ENCODE measurements at regions of chr11 and their contacts with region 1.

Region 1: GRCh38 chr11:61587521-61588453 is 6.9 kb upstream of the SYT7 start:
- DNase-seq: peak; percentile 66 to 76
- ATAC-seq: peak; percentile 70 to 84 (median 81)
- H3K4me3 ChIP-seq: peak overlapping the region; percentile 36 to 67 (median 59)
- H3K27ac ChIP-seq: peak overlapping the region; percentile 55 to 86 (median 77)
- H3K4me1 ChIP-seq: peaks cover 5 to 30% (median 23%) of the 10 kb centered on the region in 9 donors
- H3K27me3 ChIP-seq: peaks cover 0 to 46% (median 0%) of the 10 kb centered on the region in 7 donors
- CTCF ChIP-seq: peak in 6 of 9 donors; percentile 7 to 43 (median 30)

Region 2: GRCh38 chr11:61453695-61454094 is 134.1 kb before region 1 on chr11:
- intact Hi-C with region 1: no loop called
- DNase-seq: no peak
- ATAC-seq: peak in 4 of 8 donors; percentile 30 to 61 (median 45)
- H3K4me3 ChIP-seq: no peak overlapping the region
- H3K27ac ChIP-seq: peak overlapping the region in 4 of 10 donors; percentile 6 to 52 (median 24)
- H3K4me1 ChIP-seq: peaks cover 4 to 22% (median 12%) of the 10 kb centered on the region in 9 donors
- H3K27me3 ChIP-seq: no peaks in the 10 kb centered on the region
- CTCF ChIP-seq: no peak

Region 3: GRCh38 chr11:61627567-61628445 is 40.0 kb after region 1 on chr11:
- intact Hi-C with region 1: loop called in 4 of 10 experiments (anchors 2 to 10 kb)
- DNase-seq: peak; percentile 74 to 77
- ATAC-seq: peak; percentile 71 to 93 (median 83)
- H3K4me3 ChIP-seq: no peak overlapping the region
- H3K27ac ChIP-seq: peak overlapping the region in 5 of 10 donors; percentile 7 to 90 (median 88)
- H3K4me1 ChIP-seq: peaks cover 0 to 27% (median 16%) of the 10 kb centered on the region in 9 donors
- H3K27me3 ChIP-seq: no peaks in the 10 kb centered on the region
- CTCF ChIP-seq: peak; percentile 61 to 93 (median 86)